ENCODE measurements at regions of chr20 and their contacts with region 1.

Region 1: GRCh38 chr20:33915726-33916331 is 77.9 kb upstream of the RALY start:
- DNase-seq: peak in 1 of 2 experiments; percentile 85
- H3K4me3 ChIP-seq: no peak overlapping the region
- H3K27ac ChIP-seq: no peak overlapping the region
- H3K4me1 ChIP-seq: no peaks in the 10 kb centered on the region
- H3K27me3 ChIP-seq: no peaks in the 10 kb centered on the region
- CTCF ChIP-seq: peak; percentile 76 to 92 (median 85)
- EP300 ChIP-seq: no peak
- POLR2A ChIP-seq: no peak
- RAD21 ChIP-seq: peak; percentile 50 to 66

Region 2: DNA sequence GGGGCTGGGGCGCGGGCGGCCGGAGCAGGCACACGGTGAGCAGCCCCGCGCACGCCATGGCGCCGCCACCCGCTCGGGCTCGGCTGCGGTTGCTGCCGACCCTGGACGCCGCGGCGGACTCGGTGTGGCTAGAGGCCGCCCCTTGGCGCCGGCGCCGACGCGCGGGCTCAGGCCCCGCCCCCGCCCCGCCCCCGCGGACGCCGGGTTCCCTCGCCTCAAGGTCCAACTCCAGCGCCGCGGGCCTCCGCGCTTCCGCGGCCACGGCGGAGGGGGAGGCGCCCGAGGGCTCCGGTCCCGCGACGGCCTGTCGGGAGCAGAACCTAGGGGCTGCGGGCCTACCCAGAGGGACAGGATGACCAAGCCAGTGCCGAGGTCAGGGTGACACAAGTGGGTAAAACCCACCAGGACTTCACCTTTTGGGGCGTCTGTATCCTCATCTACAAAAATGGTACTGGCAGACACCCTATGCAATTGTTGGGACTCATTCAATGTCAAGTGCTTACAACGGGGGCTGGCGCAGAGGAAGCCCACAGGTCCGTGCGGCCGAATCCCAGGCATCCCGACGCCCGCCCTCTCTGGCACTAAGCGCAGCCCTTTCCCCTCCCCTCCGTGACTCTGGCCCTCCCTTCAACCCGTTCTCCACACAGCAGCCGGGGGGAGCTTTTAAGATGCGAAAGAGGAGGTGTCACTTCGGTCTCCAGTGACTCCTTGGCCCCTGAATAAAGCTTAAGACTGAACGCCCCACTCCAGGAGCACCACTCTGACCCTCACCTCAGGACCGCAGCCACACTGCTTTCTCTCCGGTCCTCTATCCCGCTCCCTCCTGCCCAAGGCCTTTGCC is 241.3 kb before region 1 on chr20 and contains the start of gene NECAB3:
- CTCF ChIA-PET with region 1: no interaction called
- POLR2A ChIA-PET with region 1: no interaction called
- DNase-seq: peak in 1 of 2 experiments; percentile 87
- H3K4me3 ChIP-seq: peak within 1 kb of the TSS; percentile 52 to 77 (median 70)
- H3K27ac ChIP-seq: no peak within 1 kb of the TSS; the same call in 1 of the 2 replicates
- H3K4me1 ChIP-seq: peaks cover 0 to 22% (median 11%) of the 10 kb centered on the region in 4 experiments; a peak in 4 of 7 replicates
- H3K27me3 ChIP-seq: no peaks in the 10 kb centered on the region
- CTCF ChIP-seq: no peak
- EP300 ChIP-seq: no peak
- POLR2A ChIP-seq: peak; percentile 4 to 31
- RAD21 ChIP-seq: no peak
- total RNA-seq, gene NECAB3: 19.7 and 20.5 TPM in 2 replicates

Region 3: DNA sequence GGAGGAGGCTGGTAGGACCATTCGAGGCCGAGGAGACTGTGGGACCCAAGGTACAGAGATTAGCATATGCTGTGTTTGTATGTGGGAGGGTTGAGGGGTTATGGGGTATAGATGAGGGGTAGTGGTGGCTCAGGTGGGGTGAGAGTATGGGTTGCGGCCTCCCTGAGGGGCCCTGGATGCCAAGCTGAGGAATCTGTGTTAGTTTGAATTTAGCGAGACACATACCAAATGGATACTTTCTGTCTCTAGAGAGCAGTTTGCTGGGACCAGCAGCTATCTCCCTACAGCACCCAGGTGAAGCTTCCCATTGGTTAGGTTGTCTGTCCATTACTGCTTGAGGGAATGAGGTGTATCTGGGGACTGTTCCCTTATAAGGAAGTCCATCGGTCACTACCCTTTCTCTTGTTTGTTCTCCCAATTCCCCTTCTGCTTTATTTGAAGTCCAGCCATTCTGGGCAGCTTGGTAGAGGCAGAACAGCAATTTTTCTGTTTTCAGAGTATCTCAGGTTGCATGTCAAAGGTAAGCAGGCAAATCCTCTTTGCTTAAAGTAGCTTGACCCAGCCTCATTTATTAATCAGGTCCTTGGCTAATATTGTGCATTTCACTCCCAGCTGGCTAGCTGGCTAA is 89.4 kb before region 1 on chr20:
- CTCF ChIA-PET with region 1: no interaction called
- POLR2A ChIA-PET with region 1: no interaction called
- DNase-seq: no peak
- H3K4me3 ChIP-seq: no peak overlapping the region
- H3K27ac ChIP-seq: 0 out of 2 replicates have a peak overlapping the region, but pooled peaks have one; percentile 43
- H3K4me1 ChIP-seq: peaks cover 0 to 10% (median 2%) of the 10 kb centered on the region in 4 experiments; a peak in 2 of 7 replicates
- H3K27me3 ChIP-seq: no peaks in the 10 kb centered on the region
- CTCF ChIP-seq: no peak
- EP300 ChIP-seq: no peak
- POLR2A ChIP-seq: no peak
- RAD21 ChIP-seq: no peak

Region 4: DNA sequence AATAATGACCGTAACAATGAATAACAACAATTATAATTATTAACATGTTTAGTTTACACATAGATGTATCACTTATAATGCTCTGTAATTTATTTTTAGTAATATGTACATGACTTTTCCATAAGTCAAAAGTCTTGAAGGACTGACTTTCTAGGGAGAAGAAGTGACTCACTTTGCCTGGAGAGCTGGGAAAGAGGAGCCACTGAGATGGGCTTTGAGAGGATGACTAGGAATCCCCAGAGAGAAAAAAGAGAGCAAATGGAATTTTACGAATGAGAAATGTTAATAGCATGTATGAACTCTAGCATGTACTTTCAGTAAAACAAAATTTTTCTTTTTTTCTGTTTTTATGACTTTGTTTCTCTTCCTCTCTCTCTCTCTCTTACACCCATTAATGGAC is 10.0 kb after region 1 on chr20:
- CTCF ChIA-PET with region 1: interaction called, 73 read pairs
- POLR2A ChIA-PET with region 1: no interaction called
- DNase-seq: no peak
- H3K4me3 ChIP-seq: no peak overlapping the region
- H3K27ac ChIP-seq: no peak overlapping the region
- H3K4me1 ChIP-seq: no peaks in the 10 kb centered on the region
- H3K27me3 ChIP-seq: no peaks in the 10 kb centered on the region
- CTCF ChIP-seq: no peak
- EP300 ChIP-seq: no peak
- POLR2A ChIP-seq: no peak
- RAD21 ChIP-seq: no peak